Activated T-helper 1 cell treated with anti-CD3 and anti-CD28 coated beads, Interleukin-12 subunit alpha, Interleukin-12 subunit beta, Interleukin-2, Interleukin-4 antibody, amounts not matched to agents 30 ng/mL and 10 ng/mL and 1 ng/mL, durations not matched to agents 14 hours and 24 hours and 36 hours (primary cell): ENCODE measurements at regions of chr5 and their contacts with region 1.

Region 1: DNA sequence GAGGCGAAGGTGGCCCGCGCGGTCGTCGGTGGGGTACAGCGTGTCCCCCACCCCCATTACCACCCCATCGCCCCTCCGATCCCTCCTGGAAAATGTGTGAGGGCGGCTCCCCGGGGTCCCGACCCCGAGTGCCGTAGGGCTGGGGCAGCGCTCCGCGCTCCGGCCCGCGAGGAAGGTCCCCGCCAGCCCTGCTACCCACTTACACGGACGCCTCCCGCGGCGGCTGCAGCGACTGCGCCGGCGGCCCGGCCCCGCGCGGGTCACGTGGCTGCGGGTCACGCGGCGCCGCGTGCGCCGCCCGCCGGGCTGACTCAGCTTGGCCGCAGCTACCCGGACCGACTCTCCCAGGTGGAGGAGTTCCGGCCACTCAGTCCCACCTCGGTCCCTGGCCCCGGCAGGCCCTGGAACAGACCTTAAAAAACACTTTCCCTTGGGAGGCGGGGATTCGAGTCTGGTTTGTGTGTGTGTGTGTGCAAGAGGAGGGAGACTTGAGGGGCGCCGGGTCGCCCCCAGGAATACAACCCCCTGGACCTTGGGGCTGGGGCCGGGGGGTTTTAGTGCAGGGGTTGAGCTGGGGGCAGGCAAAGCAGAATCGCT is at the start of gene GNPDA1:
- DNase-seq: peak; percentile 71
- H3K4me3 Mint-ChIP-seq: peak within 1 kb of the TSS; percentile 89
- H3K27ac Mint-ChIP-seq: peak within 1 kb of the TSS; percentile 97
- H3K4me1 Mint-ChIP-seq: peaks cover 87% of the 10 kb centered on the region
- H3K27me3 Mint-ChIP-seq: no peaks in the 10 kb centered on the region
- total RNA-seq, gene GNPDA1: 87.5 and 88.4 TPM in 2 replicates

Region 2: DNA sequence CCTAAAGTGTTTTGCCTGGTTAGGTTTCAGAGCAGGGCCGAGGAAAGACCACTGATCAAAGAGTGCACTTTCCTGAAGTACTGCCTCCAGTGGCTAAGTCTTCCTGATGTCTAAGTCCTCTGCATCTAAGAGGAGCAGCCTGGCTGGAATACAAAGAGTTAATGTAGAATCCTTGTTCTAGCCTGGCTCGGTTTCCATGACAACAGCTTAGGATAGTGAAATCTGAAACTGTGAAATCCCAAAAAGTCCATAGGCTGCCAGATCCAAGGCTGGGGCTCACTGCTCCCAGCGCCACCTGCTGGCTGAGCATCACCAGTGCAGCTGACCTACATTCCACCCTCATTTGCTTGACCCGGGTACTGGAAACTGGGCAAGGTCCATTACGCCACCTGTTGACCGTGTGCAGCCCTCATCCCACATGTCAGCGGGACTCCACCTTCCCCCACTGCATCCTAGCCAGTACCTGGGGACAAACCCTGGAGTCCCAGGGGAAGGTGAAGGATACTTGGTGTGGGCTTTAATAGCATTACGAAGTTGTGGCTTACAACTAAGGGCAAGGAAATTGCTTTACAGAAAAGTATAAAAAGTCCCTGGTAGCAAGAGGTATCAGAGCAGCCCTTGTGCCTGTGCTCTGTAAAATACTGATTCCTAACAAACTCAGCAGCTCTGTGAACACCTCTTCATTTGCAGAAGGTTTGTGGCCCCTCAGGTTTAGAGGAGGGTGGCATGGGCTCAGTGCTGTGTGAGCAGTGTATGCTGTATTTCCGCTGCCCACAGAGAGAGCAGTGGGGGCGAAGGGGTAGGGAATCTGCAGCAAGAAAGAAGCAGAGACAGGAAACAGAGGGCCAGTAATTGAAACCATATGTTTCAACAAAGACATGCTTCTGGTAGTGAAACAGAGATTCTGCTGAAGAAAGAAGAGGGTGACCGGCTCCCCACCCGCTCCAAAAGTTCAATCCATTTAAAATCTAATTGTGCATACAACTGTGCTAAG is 488.0 kb before region 1 on chr5:
- intact Hi-C with region 1: no loop called
- DNase-seq: no peak
- H3K4me3 Mint-ChIP-seq: no peak overlapping the region
- H3K27ac Mint-ChIP-seq: peak overlapping the region; percentile 29
- H3K4me1 Mint-ChIP-seq: peaks cover 38% of the 10 kb centered on the region
- H3K27me3 Mint-ChIP-seq: no peaks in the 10 kb centered on the region

Region 3: GRCh38 chr5:141923448-141924352 is 89.2 kb before region 1 on chr5 and contains the start of gene DELE1:
- intact Hi-C with region 1: loop called (anchors 5 kb)
- DNase-seq: peak; percentile 88
- H3K4me3 Mint-ChIP-seq: peak within 1 kb of the TSS; percentile 92
- H3K27ac Mint-ChIP-seq: peak within 1 kb of the TSS; percentile 96
- H3K4me1 Mint-ChIP-seq: peaks cover 32% of the 10 kb centered on the region
- H3K27me3 Mint-ChIP-seq: no peaks in the 10 kb centered on the region
- total RNA-seq, gene DELE1: 68.4 and 81.5 TPM in 2 replicates

Region 4: GRCh38 chr5:141992349-141992963 is 20.4 kb before region 1 on chr5:
- intact Hi-C with region 1: loop called (anchors 1 kb)
- DNase-seq: peak; percentile 53
- H3K4me3 Mint-ChIP-seq: no peak overlapping the region
- H3K27ac Mint-ChIP-seq: no peak overlapping the region
- H3K4me1 Mint-ChIP-seq: peaks cover 18% of the 10 kb centered on the region
- H3K27me3 Mint-ChIP-seq: no peaks in the 10 kb centered on the region

Region 5: DNA sequence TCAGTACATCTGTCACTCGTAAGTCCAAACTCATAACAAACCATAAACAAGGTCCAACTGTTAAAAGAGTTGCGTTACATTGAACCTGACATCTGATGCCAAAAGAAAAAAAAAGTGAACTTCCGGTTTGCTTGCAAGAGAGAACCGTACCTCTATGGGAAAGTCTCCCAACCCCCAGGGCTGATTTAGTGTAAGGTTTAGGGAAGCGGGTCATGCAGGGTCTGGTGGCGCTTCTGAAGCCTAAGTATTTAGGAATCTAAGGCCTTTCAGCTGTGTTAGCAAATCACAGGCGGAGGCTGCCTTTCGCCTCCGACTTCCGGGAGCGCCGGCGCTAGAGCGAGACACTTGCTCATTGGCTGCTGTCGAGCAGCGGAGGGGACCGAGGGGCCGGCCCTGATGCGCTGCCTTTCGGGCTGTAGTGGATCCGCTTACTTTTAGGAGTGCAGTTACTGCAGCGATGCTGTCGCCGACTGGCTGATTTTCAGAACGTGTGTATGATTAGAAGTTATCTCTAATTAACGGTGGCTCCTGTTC is 11.9 kb after region 1 on chr5:
- intact Hi-C with region 1: loop called (anchors 1 kb)
- DNase-seq: peak; percentile 83
- H3K4me3 Mint-ChIP-seq: peak overlapping the region; percentile 89
- H3K27ac Mint-ChIP-seq: peak overlapping the region; percentile 100
- H3K4me1 Mint-ChIP-seq: peaks cover 23% of the 10 kb centered on the region
- H3K27me3 Mint-ChIP-seq: no peaks in the 10 kb centered on the region

Region 6: DNA sequence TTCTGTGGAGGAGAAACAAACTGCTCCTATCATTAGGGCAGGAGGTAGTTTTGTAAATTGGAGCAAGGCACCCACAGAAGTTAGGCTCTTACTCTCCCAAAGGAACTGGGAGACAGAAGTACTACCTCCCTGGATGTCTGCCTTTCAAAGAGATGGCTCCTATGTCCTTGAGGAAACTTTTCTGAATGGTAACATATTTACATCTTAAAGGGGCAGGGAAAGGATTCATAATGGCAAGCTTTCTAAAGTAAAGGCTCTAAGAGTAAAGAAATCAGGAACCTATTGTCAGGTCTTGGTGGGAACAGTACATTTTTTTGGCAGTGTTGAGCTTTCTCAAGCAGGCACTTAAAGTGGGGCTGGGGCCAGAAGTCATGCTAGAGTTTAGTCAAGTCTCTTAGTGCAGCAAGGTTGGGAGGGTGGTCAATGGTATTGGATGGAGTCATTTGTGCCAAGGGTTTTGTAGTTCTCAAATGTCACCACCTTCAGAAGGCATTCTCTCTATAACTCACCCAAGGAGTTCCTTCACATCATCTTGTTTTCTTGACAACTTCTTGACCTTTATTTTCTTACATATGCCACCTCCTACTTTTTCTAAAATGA is 69.4 kb after region 1 on chr5:
- intact Hi-C with region 1: loop called (anchors 1 kb)
- DNase-seq: no peak
- H3K4me3 Mint-ChIP-seq: no peak overlapping the region
- H3K27ac Mint-ChIP-seq: peak overlapping the region; percentile 50
- H3K4me1 Mint-ChIP-seq: peaks cover 29% of the 10 kb centered on the region
- H3K27me3 Mint-ChIP-seq: peaks cover 2% of the 10 kb centered on the region

Region 7: DNA sequence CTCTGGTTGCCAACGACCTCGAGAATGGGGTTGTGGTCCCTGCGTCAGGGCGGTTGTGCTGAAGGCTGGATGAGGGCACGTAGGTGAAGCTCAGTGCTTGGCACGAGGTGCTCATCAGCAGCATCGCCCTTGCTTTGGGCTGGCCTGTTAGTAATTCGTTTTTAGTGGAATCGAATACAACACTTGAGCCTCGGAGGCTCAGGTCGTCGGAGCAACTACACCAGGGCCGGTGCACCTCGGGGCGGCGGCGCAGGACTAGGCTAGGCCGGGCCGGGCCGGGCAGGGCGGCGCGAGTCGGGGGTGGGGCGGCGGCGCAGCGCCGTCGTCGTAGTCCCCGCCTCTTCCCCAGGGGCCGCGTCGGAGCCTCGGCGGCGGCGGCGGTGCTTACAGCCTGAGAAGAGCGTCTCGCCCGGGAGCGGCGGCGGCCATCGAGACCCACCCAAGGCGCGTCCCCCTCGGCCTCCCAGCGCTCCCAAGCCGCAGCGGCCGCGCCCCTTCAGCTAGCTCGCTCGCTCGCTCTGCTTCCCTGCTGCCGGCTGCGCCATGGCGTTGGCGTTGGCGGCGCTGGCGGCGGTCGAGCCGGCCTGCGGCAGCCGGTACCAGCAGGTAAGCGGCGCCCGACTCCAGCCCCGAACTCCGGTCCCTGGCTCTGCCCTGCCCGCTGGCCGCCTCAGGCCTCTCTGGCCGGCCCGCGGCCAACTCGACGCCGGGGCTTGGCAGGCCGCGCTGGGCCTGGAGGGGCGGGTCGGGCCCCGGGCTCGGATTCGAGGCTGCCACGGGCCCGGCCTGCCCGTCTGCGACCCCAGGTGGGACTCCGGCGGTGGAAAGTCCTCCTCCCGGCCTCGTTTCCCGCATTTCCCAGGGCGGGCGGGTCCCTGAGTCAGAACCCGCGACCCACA is 95.8 kb after region 1 on chr5 and contains the start of gene NDFIP1:
- intact Hi-C with region 1: loop called (anchors 1 kb)
- DNase-seq: peak; percentile 85
- H3K4me3 Mint-ChIP-seq: peak within 1 kb of the TSS; percentile 97
- H3K27ac Mint-ChIP-seq: peak within 1 kb of the TSS; percentile 100
- H3K4me1 Mint-ChIP-seq: peaks cover 80% of the 10 kb centered on the region
- H3K27me3 Mint-ChIP-seq: no peaks in the 10 kb centered on the region
- total RNA-seq, gene NDFIP1: 119 and 129 TPM in 2 replicates

Region 8: DNA sequence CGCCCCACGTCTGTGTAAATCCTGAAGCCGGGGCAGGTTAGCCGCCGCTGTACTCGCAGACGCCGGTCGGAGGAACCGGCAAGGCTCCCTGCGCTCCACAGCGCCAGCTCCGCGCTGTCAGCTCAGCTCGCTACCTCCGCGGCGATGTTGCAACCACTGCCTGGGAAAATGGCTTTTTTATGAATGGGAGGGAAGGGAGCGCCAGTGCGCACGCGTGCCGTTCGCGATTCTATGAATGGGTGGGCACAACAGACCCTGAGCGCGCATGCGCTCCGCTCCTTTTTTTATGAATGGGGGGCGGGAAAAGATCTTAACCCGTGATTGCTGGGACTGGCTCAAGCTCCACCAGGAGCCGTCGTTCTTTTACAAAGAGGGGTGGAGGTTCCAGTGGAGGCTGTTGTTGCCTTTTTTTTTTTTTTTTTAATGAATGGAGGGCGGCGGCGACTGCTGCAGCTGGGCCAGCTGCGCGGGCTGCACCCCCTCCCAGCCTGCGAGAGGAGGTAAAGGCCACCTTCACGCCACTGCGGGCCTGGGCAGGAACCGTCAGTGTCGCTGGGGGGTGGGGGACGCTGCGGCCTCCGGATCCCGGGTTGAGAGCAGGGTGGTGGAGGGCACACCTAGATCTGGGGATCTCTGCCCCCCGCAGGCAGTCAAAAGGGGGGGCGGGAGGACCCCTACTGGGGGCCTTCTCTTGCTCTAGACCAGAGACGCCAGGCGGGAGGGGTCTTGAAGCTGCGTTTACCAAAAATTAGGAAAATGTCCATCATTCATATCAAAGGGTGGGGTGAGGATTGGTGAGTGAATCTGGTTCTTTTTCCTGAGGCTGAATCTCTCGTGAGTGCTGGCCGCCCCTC is 312.2 kb after region 1 on chr5 and contains the start of gene SPRY4:
- intact Hi-C with region 1: loop called (anchors 10 kb)
- DNase-seq: peak; percentile 80
- H3K4me3 Mint-ChIP-seq: peak within 1 kb of the TSS; percentile 93
- H3K27ac Mint-ChIP-seq: peak within 1 kb of the TSS; percentile 81
- H3K4me1 Mint-ChIP-seq: peaks cover 42% of the 10 kb centered on the region
- H3K27me3 Mint-ChIP-seq: peaks cover 43% of the 10 kb centered on the region
- total RNA-seq, gene SPRY4: 1.7 and 2.4 TPM in 2 replicates

Region 9: GRCh38 chr5:142375944-142376411 is 363.1 kb after region 1 on chr5:
- intact Hi-C with region 1: no loop called
- DNase-seq: no peak
- H3K4me3 Mint-ChIP-seq: no peak overlapping the region
- H3K27ac Mint-ChIP-seq: no peak overlapping the region
- H3K4me1 Mint-ChIP-seq: peaks cover 7% of the 10 kb centered on the region
- H3K27me3 Mint-ChIP-seq: peaks cover under 1% of the 10 kb centered on the region